ENCODE measurements at regions of chr1 and their contacts with region 1.

Region 1: DNA sequence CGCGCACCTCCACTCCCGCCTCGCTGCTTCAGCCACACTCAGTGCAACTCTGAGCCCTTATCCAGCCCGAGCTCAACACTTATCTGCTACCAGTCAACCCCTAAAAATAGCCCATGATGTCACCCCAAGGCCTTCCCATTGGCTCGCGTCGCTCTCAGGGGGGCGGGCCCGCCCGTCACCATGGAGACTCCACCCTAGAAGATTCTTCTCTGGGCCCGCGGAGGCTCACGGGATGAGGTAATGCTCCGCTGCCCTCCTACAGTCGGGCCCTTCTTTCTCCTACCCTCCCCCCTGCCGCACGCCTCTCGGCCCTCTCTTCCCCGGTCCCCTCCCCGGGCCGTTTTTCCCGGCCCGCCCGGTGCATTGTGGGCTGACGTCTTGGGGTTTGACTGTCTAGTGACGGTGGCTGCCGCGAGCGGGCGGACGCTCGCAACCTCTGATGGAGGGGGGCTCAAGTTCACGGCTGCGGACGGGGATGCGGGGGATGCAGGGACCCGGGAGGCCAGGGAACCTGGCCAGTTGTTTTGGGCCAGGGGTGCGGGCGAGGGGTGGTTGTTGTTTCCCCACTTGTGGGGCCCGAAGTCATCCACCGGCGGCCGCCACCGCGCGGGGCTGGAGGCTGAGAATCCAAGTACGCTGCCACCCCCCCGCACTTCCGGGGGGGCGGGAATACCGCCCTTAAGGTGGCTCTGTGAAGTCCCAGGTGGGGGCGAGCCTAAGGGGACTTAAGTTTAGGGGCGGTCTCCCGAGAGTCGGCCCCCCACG is at the start of gene JUN:
- DNase-seq: peak; percentile 100
- H3K4me3 ChIP-seq: peak within 1 kb of the TSS; percentile 60 to 91 (median 80)
- H3K27ac ChIP-seq: peak within 1 kb of the TSS; percentile 97
- H3K4me1 ChIP-seq: peaks cover 30% of the 10 kb centered on the region
- H3K27me3 ChIP-seq: no peaks in the 10 kb centered on the region
- CTCF ChIP-seq: no peak
- POLR2A ChIP-seq: peak; percentile 100
- total RNA-seq, gene JUN: 81.1 and 88.3 TPM in 2 replicates

Region 2: DNA sequence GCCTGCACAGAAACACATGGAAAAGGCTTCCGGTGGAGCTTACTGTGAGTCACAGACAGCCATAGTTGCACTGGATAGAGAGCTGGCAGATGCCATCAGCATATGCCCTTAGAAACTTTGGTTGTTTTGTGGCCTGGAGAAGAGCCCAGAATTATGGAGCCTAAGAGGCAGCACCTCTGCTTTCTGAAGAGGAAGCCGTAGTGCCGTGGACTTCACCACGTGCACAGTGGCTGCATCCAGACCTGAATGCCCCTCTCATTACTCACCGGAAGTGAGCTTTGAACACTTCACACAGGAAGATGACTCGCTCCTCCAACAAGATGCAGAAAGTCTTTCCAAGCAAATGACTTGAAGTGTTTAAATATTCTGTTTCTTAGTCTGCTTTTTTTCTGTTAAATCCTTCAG is 28.7 kb before region 1 on chr1:
- CTCF ChIA-PET with region 1: no interaction called
- POLR2A ChIA-PET with region 1: no interaction called
- dilution Hi-C with region 1: no loop called
- intact Hi-C with region 1: loop called (anchors 1 kb)
- DNase-seq: peak; percentile 99
- H3K4me3 ChIP-seq: peak overlapping the region in 1 of 3 experiments; percentile 18
- H3K27ac ChIP-seq: peak overlapping the region; percentile 96
- H3K4me1 ChIP-seq: peaks cover 40% of the 10 kb centered on the region
- H3K27me3 ChIP-seq: no peaks in the 10 kb centered on the region
- CTCF ChIP-seq: no peak
- POLR2A ChIP-seq: no peak

Region 3: GRCh38 chr1:58857680-58858673 is 73.8 kb after region 1 on chr1:
- CTCF ChIA-PET with region 1: no interaction called
- POLR2A ChIA-PET with region 1: interaction called, 4 read pairs
- dilution Hi-C with region 1: no loop called
- intact Hi-C with region 1: loop called (anchors 1 kb)
- DNase-seq: no peak
- H3K4me3 ChIP-seq: no peak overlapping the region
- H3K27ac ChIP-seq: no peak overlapping the region
- H3K4me1 ChIP-seq: peaks cover 23% of the 10 kb centered on the region
- H3K27me3 ChIP-seq: no peaks in the 10 kb centered on the region
- CTCF ChIP-seq: no peak
- POLR2A ChIP-seq: no peak

Region 4: GRCh38 chr1:59025898-59026426 is 241.8 kb after region 1 on chr1:
- CTCF ChIA-PET with region 1: interaction called, 3 read pairs
- POLR2A ChIA-PET with region 1: no interaction called
- dilution Hi-C with region 1: no loop called
- intact Hi-C with region 1: loop called (anchors 1 kb)
- DNase-seq: no peak
- H3K4me3 ChIP-seq: no peak overlapping the region
- H3K27ac ChIP-seq: no peak overlapping the region
- H3K4me1 ChIP-seq: peaks cover 34% of the 10 kb centered on the region
- H3K27me3 ChIP-seq: no peaks in the 10 kb centered on the region
- CTCF ChIP-seq: no peak
- POLR2A ChIP-seq: no peak

Region 5: DNA sequence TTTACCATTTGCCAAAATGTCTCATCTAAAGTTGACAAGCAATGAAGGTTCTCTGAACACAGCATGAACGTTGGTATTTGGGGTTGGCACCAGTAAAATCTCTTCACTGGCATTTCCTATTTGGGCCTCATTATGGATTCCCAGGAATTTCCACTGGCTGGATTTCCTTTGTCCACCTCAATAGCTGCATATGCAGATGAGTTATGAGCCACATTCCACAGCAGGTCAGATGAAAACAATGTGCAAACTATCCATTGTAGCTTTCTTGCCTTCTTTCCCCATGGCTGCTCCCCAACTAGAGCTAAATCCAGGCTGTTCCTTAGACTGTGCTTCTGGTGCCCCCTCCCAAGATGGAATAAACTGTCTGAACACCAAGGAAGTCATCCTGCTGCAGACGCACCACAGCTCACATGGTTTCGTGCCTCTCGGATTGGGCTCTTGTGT is 344.6 kb after region 1 on chr1:
- CTCF ChIA-PET with region 1: no interaction called
- POLR2A ChIA-PET with region 1: no interaction called
- dilution Hi-C with region 1: no loop called
- intact Hi-C with region 1: loop called (anchors 1 kb)
- DNase-seq: peak; percentile 77
- H3K4me3 ChIP-seq: no peak overlapping the region
- H3K27ac ChIP-seq: peak overlapping the region; percentile 87
- H3K4me1 ChIP-seq: peaks cover 32% of the 10 kb centered on the region
- H3K27me3 ChIP-seq: no peaks in the 10 kb centered on the region
- CTCF ChIP-seq: no peak
- POLR2A ChIP-seq: peak; percentile 33

Region 6: DNA sequence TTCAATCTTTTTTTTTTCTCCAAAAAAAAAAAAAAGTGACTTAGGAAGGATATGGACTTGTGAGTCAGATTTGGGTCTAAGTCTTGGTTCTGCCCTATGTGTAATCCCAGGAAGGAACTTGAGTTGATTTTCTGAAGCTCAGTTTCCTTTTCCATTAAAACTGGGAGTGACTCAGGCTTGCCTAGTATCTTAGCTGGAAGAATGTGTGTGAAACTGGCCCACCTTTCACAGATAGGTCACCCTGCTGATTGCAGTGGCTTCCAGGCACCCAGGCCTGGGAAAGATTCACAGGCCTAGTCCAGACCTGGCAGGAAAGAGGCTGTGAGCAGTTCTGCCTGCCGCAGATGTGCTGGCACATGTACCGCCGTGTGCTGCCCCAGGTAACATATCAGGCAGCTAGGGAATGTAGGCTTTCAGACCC is 812.3 kb after region 1 on chr1:
- CTCF ChIA-PET with region 1: no interaction called
- POLR2A ChIA-PET with region 1: interaction called, 3 read pairs
- dilution Hi-C with region 1: no loop called
- intact Hi-C with region 1: loop called (anchors 2 kb)
- DNase-seq: peak; percentile 98
- H3K4me3 ChIP-seq: no peak overlapping the region
- H3K27ac ChIP-seq: peak overlapping the region; percentile 83
- H3K4me1 ChIP-seq: peaks cover 29% of the 10 kb centered on the region
- H3K27me3 ChIP-seq: no peaks in the 10 kb centered on the region
- CTCF ChIP-seq: no peak
- POLR2A ChIP-seq: no peak